ENCODE measurements at regions of chr19 and their contacts with region 1.

Region 1: GRCh38 chr19:12564016-12564664 is 12.9 kb upstream of the ZNF564 start:
- DNase-seq: peak; percentile 96
- H3K4me3 Mint-ChIP-seq: no peak overlapping the region
- H3K27ac Mint-ChIP-seq: no peak overlapping the region
- H3K4me1 Mint-ChIP-seq: peaks cover 4% of the 10 kb centered on the region
- H3K27me3 Mint-ChIP-seq: no peaks in the 10 kb centered on the region

Region 2: DNA sequence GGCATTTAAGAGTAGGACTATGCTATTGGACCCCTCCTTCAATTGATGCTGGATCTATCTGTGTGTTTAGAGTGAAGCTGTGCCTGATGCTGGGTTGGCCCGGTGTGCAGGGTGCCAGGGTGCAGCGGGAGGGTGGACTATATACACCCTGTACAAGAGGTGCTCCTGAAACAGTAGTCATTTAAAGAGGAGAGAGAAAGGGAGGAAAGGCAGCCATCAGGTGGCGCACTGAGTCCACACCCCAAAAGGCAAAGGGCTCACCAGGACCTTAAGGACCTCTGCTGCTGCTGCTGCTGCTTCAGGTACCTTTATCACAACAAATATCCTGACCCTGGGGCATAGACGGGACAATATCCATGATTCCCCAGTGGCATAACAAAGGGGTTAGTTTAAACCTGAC is 361.9 kb before region 1 on chr19:
- CTCF ChIA-PET with region 1: no interaction called
- intact Hi-C with region 1: loop called (anchors 1 kb)
- DNase-seq: peak; percentile 84
- H3K4me3 Mint-ChIP-seq: no peak overlapping the region
- H3K27ac Mint-ChIP-seq: no peak overlapping the region
- H3K4me1 Mint-ChIP-seq: peaks cover 22% of the 10 kb centered on the region
- H3K27me3 Mint-ChIP-seq: no peaks in the 10 kb centered on the region

Region 3: GRCh38 chr19:12610540-12611360 is 46.6 kb after region 1 on chr19 and contains the starts of genes ZNF490 and ZNF791:
- CTCF ChIA-PET with region 1: interaction called, 3 read pairs
- intact Hi-C with region 1: loop called (anchors 2 kb)
- DNase-seq: peak; percentile 99
- H3K4me3 Mint-ChIP-seq: peak within 1 kb of the TSS; percentile 100
- H3K27ac Mint-ChIP-seq: peak within 1 kb of the TSS; percentile 95
- H3K4me1 Mint-ChIP-seq: peaks cover 43% of the 10 kb centered on the region
- H3K27me3 Mint-ChIP-seq: no peaks in the 10 kb centered on the region
- total RNA-seq, gene ZNF490: 3.9 to 5.0 TPM
- total RNA-seq, gene ZNF791: 11.2 to 11.9 TPM

Region 4: DNA sequence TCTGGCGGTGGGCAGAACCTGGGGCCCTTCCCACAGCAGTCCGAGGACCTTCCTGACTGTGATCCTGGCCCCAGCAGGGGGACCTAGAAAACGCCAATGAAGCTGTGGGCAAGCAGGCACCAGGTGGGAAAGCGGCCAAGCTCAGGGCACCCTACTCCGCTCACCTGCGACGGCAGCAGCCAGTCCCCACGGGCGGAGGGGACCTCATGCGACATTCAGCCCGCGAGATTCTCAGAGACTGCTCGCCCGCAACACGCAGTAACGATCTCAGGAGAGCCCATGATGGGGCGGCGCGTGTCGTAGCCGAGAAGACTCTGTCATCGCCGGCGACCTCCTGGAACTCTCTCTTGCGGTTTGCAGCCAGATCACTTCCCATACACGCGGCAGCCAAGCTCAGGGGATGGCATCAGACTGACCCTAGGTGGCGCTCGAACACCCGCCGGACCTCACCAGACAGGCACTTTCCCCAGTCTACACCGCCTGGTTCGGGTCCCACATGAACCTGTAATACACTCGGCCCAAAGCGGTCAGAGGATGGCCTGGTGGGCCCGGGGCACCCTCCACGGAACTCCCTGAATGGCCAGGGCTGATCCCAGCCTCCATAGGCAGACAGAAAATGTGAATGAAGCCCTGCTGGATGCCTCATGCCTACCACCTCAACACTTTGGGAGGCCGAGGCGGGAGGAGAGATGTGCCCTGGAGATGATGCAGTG is 75.9 kb after region 1 on chr19:
- CTCF ChIA-PET with region 1: no interaction called
- intact Hi-C with region 1: loop called (anchors 1 kb)
- DNase-seq: peak; percentile 94
- H3K4me3 Mint-ChIP-seq: peak overlapping the region; percentile 68
- H3K27ac Mint-ChIP-seq: peak overlapping the region; percentile 54
- H3K4me1 Mint-ChIP-seq: peaks cover 24% of the 10 kb centered on the region
- H3K27me3 Mint-ChIP-seq: no peaks in the 10 kb centered on the region

Region 5: GRCh38 chr19:12672744-12673143 is 108.6 kb after region 1 on chr19:
- CTCF ChIA-PET with region 1: interaction called, 16 read pairs
- intact Hi-C with region 1: loop called (anchors 1 kb)
- DNase-seq: no peak
- H3K4me3 Mint-ChIP-seq: no peak overlapping the region
- H3K27ac Mint-ChIP-seq: no peak overlapping the region
- H3K4me1 Mint-ChIP-seq: peaks cover 39% of the 10 kb centered on the region
- H3K27me3 Mint-ChIP-seq: no peaks in the 10 kb centered on the region

Region 6: GRCh38 chr19:12881172-12881808 is 317.1 kb after region 1 on chr19 and contains the start of gene DNASE2:
- CTCF ChIA-PET with region 1: no interaction called
- intact Hi-C with region 1: no loop called
- DNase-seq: peak; percentile 97
- H3K4me3 Mint-ChIP-seq: peak within 1 kb of the TSS; percentile 88
- H3K27ac Mint-ChIP-seq: peak within 1 kb of the TSS; percentile 76
- H3K4me1 Mint-ChIP-seq: peaks cover 28% of the 10 kb centered on the region
- H3K27me3 Mint-ChIP-seq: no peaks in the 10 kb centered on the region
- total RNA-seq, gene DNASE2: 30.9 to 31.6 TPM